ENCODE measurements at regions of chr3 and their contacts with region 1.

Region 1: GRCh38 chr3:141402476-141403171 is 34.3 kb downstream of the ZBTB38 start:
- DNase-seq: peak; percentile 42 to 94 (median 61)

Region 2: DNA sequence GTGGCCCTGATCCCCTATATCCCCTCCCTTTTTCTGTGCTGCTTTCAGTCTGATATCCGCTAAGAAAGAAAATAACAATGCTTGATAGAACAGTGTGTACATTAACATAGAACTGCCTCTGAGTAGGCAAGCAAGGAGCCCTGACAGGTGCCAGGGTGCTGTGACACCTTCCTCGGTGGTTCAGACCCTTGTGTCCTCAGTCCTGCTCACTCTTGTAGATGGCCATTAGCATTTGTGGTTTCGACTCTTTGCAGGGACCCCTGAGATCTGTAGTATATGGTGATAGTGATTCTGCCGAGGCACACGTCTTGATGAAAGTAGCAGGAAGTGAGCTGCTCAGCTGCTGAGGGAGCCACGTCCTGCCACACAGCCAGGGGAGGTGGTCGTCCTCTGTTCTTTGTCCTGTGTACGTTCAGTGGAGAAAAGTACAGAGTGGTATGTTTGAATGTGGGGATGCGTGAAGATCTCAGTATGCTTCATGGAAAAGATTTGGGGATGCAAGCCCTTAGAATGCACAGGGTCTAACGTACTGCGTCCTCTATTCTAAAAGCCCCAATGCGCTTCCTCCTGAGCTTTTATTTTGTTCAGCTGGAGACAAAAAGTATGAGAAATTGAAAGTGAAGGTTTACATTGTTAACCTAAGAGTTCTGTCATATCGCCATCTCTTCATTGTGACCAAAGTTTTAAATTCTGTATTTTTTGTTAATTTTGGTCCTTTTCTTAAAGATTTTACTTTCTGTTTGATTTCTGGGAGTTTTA is 135.6 kb before region 1 on chr3:
- intact Hi-C with region 1: no loop called
- DNase-seq: no peak

Region 3: GRCh38 chr3:141303481-141304223 is 99.0 kb before region 1 on chr3:
- intact Hi-C with region 1: no loop called
- DNase-seq: peak in 2 of 10 donors; percentile 15 to 56

Region 4: GRCh38 chr3:141368062-141368924 is 34.3 kb before region 1 on chr3 and contains the start of gene ZBTB38:
- intact Hi-C with region 1: loop called (anchors 5 kb)
- DNase-seq: peak; percentile 77 to 99 (median 88)

Measured in posterior cingulate gyrus (tissue), 11 donors.